WTC11 (cell line): ENCODE measurements at regions of chr20 and their contacts with region 1.

Region 1: GRCh38 chr20:5191829-5192569 is 65.2 kb downstream of the CDS2 start:
- DNase-seq: peak; percentile 16
- ATAC-seq: peak; percentile 73
- H3K4me3 Mint-ChIP-seq: no peak overlapping the region
- H3K27ac Mint-ChIP-seq: peak overlapping the region; percentile 71
- H3K4me1 Mint-ChIP-seq: peaks cover 22% of the 10 kb centered on the region
- H3K27me3 Mint-ChIP-seq: no peaks in the 10 kb centered on the region
- CTCF ChIP-seq: peak; percentile 50; the same call in 1 of the 2 replicates

Region 2: DNA sequence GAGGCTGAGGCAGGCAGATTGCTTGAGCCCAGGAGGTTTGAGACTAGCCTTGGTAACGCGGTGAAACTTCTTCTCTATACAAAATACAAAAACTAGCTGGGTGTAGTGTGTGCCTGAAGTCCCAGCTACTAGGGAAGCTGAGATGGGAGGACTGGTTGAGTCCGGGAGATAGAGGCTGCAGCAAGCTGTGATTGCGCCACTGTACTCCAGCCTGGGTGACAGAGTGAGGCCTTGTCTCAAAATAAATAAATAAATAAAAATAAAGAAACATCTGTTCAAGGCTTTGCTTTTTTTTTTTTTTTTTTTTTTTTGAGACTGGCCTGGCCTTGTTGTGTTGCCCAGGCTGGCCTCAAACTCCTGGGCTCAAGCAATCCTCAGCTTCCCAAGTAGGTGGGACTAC is 167.0 kb before region 1 on chr20:
- CTCF ChIA-PET with region 1: no interaction called
- POLR2A ChIA-PET with region 1: no interaction called
- DNase-seq: no peak
- ATAC-seq: no peak
- H3K4me3 Mint-ChIP-seq: no peak overlapping the region
- H3K27ac Mint-ChIP-seq: no peak overlapping the region
- H3K4me1 Mint-ChIP-seq: no peaks in the 10 kb centered on the region
- H3K27me3 Mint-ChIP-seq: no peaks in the 10 kb centered on the region
- CTCF ChIP-seq: no peak

Region 3: GRCh38 chr20:5100684-5101347 is 91.2 kb before region 1 on chr20:
- CTCF ChIA-PET with region 1: interaction called, 12 read pairs
- POLR2A ChIA-PET with region 1: no interaction called
- DNase-seq: peak; percentile 80
- ATAC-seq: peak; percentile 87
- H3K4me3 Mint-ChIP-seq: no peak overlapping the region
- H3K27ac Mint-ChIP-seq: peak overlapping the region; percentile 53; the same call in 1 of the 2 replicates
- H3K4me1 Mint-ChIP-seq: no peaks in the 10 kb centered on the region
- H3K27me3 Mint-ChIP-seq: no peaks in the 10 kb centered on the region
- CTCF ChIP-seq: peak; percentile 89

Region 4: GRCh38 chr20:5119435-5120188 is 72.4 kb before region 1 on chr20 and contains the start of gene PCNA:
- CTCF ChIA-PET with region 1: interaction called, 265 read pairs
- POLR2A ChIA-PET with region 1: interaction called, 5 read pairs
- DNase-seq: peak; percentile 96
- ATAC-seq: peak; percentile 96
- H3K4me3 Mint-ChIP-seq: peak within 1 kb of the TSS; percentile 93
- H3K27ac Mint-ChIP-seq: peak within 1 kb of the TSS; percentile 97
- H3K4me1 Mint-ChIP-seq: peaks cover 39% of the 10 kb centered on the region
- H3K27me3 Mint-ChIP-seq: no peaks in the 10 kb centered on the region
- CTCF ChIP-seq: no peak
- total RNA-seq, gene PCNA: 239 to 262 TPM (median 240 TPM) in 3 replicates

Region 5: DNA sequence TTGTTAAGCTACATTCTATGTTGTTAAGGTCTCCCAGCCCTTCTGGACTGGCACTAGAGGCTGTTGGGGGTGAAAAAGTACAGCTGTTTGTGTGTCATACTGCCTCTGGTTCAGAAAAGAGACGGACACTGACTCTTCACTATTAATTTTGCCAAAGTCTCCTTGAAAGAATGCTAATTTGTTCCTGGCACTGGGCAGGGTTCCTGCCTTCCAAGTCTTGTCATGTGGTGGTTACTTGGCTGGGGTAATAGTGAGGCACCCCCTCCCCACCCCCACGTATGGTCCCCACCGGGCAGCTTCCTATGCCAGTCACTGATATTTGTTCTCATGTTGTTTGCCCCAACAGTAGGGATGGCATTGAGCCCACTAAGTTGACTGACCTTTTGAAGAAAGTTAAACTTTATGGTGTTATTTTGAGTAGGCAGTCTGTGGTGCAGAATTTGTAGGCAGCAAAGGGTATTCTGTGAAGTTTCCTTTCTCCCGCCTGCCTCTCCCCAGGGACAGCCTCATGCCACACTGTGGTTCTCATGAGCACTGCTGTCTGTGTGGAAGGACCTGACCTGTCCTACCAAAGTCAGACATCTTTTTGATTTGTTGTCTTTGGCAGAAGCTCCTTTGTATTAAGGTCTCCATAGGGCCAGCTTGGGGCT is 56.5 kb before region 1 on chr20:
- CTCF ChIA-PET with region 1: interaction called, 14 read pairs
- POLR2A ChIA-PET with region 1: no interaction called
- DNase-seq: no peak
- ATAC-seq: no peak
- H3K4me3 Mint-ChIP-seq: no peak overlapping the region
- H3K27ac Mint-ChIP-seq: no peak overlapping the region
- H3K4me1 Mint-ChIP-seq: peaks cover 5% of the 10 kb centered on the region
- H3K27me3 Mint-ChIP-seq: no peaks in the 10 kb centered on the region
- CTCF ChIP-seq: no peak

Region 6: GRCh38 chr20:5168651-5169396 is 23.2 kb before region 1 on chr20:
- CTCF ChIA-PET with region 1: interaction called, 45 read pairs
- POLR2A ChIA-PET with region 1: no interaction called
- DNase-seq: peak; percentile 41
- ATAC-seq: peak; percentile 80
- H3K4me3 Mint-ChIP-seq: no peak overlapping the region
- H3K27ac Mint-ChIP-seq: peak overlapping the region; percentile 93
- H3K4me1 Mint-ChIP-seq: peaks cover 55% of the 10 kb centered on the region
- H3K27me3 Mint-ChIP-seq: no peaks in the 10 kb centered on the region
- CTCF ChIP-seq: no peak

Region 7: GRCh38 chr20:5230544-5230943 is 38.5 kb after region 1 on chr20:
- CTCF ChIA-PET with region 1: no interaction called
- POLR2A ChIA-PET with region 1: no interaction called
- DNase-seq: no peak
- ATAC-seq: no peak
- H3K4me3 Mint-ChIP-seq: no peak overlapping the region
- H3K27ac Mint-ChIP-seq: no peak overlapping the region
- H3K4me1 Mint-ChIP-seq: peaks cover 3% of the 10 kb centered on the region; the same call in 1 of the 2 replicates
- H3K27me3 Mint-ChIP-seq: no peaks in the 10 kb centered on the region; the same call in 1 of the 2 replicates
- CTCF ChIP-seq: no peak

Region 8: DNA sequence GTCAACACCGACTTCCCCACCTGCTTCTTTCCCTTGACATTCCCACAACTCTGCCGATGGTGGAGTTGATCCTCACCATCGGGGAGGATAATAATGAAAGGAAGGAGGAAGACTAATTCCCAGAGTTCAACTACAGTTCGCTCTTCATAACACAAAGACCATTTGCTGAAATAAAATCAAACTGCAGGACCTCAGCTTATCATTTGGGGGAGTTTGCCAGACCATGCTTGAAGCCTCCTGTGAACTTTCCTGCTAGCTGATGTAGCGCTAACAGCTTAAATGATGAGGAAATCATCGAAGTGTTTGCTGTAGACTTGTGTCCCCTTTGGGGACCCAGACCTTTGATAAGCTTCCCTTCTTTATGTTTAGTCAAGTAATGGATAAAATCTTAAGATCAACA is 98.6 kb after region 1 on chr20:
- CTCF ChIA-PET with region 1: no interaction called
- POLR2A ChIA-PET with region 1: no interaction called
- DNase-seq: no peak
- ATAC-seq: no peak
- H3K4me3 Mint-ChIP-seq: no peak overlapping the region
- H3K27ac Mint-ChIP-seq: no peak overlapping the region
- H3K4me1 Mint-ChIP-seq: no peaks in the 10 kb centered on the region
- H3K27me3 Mint-ChIP-seq: peaks cover 6% of the 10 kb centered on the region
- CTCF ChIP-seq: no peak

Region 9: GRCh38 chr20:5390720-5391119 is 198.7 kb after region 1 on chr20:
- CTCF ChIA-PET with region 1: no interaction called
- POLR2A ChIA-PET with region 1: no interaction called
- DNase-seq: no peak
- ATAC-seq: no peak
- H3K4me3 Mint-ChIP-seq: no peak overlapping the region
- H3K27ac Mint-ChIP-seq: no peak overlapping the region
- H3K4me1 Mint-ChIP-seq: 0 out of 2 replicates have a peak, but pooled peaks cover 4% of the 10 kb centered on the region
- H3K27me3 Mint-ChIP-seq: no peaks in the 10 kb centered on the region; the same call in 1 of the 2 replicates
- CTCF ChIP-seq: no peak